WTC11 (cell line): ENCODE measurements at regions of chr10 and their contacts with region 1.

Region 1: GRCh38 chr10:70267161-70267933 is 16.5 kb downstream of the NPFFR1 start:
- DNase-seq: peak; percentile 79
- ATAC-seq: peak; percentile 56
- H3K4me3 Mint-ChIP-seq: no peak overlapping the region
- H3K27ac Mint-ChIP-seq: no peak overlapping the region
- H3K4me1 Mint-ChIP-seq: peaks cover 2% of the 10 kb centered on the region
- H3K27me3 Mint-ChIP-seq: peaks cover 9% of the 10 kb centered on the region
- CTCF ChIP-seq: peak; percentile 52

Region 2: DNA sequence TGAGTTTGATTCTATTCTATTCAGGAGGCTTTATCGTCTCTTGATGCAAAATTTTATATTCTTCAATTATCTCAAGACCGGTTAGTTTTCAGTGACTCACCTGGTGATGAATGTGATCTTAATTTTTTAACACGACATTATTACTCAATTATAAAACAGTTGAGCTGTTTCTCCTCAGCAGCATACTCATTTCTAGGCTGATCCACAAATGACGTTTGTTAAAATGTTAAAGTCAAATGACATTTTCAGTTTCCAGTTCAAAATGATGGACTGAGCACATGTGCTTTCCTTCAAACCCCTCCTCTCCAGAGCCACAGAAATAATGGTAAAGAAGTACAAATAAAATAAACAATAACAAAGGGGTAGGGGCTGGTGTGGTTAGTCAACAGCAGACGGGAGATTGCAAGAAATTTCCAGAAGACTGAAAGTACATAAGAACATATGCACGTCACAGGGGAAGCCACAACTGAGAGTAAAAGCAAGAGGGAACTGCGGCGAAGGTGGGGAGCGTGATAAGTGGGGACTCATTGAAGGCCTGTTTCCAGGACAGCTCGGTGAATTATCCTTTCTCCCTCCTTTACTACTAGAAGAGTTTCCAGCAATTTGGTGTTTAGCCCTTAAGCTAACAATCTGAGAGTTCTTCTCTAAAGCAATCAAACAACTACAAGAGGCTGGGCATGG is 203.8 kb before region 1 on chr10:
- CTCF ChIA-PET with region 1: no interaction called
- POLR2A ChIA-PET with region 1: no interaction called
- DNase-seq: no peak
- ATAC-seq: no peak
- H3K4me3 Mint-ChIP-seq: no peak overlapping the region
- H3K27ac Mint-ChIP-seq: no peak overlapping the region
- H3K4me1 Mint-ChIP-seq: peaks cover 11% of the 10 kb centered on the region
- H3K27me3 Mint-ChIP-seq: no peaks in the 10 kb centered on the region; the same call in 1 of the 2 replicates
- CTCF ChIP-seq: no peak

Region 3: DNA sequence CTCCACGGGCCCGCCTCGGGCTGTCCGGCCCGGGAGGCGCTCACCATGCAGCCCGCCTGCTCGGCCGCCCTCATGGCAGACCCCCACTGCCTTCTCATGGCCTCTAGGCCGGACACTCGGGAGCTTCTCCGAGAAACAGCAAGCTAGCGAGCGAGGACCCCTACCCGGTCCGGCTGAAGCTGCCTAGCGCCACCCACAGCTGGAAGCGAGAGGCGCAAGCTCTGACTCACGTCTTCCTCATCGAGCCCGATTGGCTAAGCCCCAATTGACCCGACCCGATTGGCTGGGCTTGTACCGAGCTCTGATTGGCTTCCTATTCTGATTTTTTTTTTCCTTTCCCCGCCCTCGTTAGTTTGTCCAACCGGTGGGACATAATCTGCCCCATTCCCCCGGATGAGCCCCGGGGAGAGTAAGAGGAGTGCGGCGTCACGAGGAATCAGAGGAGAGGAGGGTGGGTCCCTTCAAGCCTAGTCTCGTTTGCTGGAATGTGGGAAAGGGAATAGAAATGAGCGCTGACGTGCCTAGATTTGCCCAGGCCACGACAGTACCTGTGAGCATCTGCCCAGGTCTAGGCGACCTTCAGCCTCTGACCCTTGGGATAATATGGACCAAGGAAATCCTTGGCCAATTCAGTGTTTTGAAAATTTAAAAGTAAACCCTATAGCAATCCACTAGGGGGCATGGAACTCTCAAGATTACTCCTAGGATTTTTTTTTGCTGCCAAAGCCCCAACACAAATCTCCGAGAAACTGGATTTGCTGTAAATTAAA is 120.7 kb before region 1 on chr10 and contains the start of gene TYSND1:
- CTCF ChIA-PET with region 1: interaction called, 23 read pairs
- POLR2A ChIA-PET with region 1: interaction called, 4 read pairs
- DNase-seq: peak; percentile 98
- ATAC-seq: peak; percentile 93
- H3K4me3 Mint-ChIP-seq: peak within 1 kb of the TSS; percentile 78
- H3K27ac Mint-ChIP-seq: peak within 1 kb of the TSS; percentile 96
- H3K4me1 Mint-ChIP-seq: peaks cover 16% of the 10 kb centered on the region
- H3K27me3 Mint-ChIP-seq: no peaks in the 10 kb centered on the region
- CTCF ChIP-seq: peak; percentile 17; the same call in 1 of the 2 replicates
- total RNA-seq, gene TYSND1: 18.9 to 21.3 TPM (median 20.7 TPM) in 3 replicates

Region 4: GRCh38 chr10:70233109-70233938 is 34.0 kb before region 1 on chr10 and contains the start of gene PPA1:
- CTCF ChIA-PET with region 1: interaction called, 20 read pairs
- POLR2A ChIA-PET with region 1: no interaction called
- DNase-seq: peak; percentile 99
- ATAC-seq: peak; percentile 95
- H3K4me3 Mint-ChIP-seq: peak within 1 kb of the TSS; percentile 92
- H3K27ac Mint-ChIP-seq: peak within 1 kb of the TSS; percentile 73
- H3K4me1 Mint-ChIP-seq: peaks cover 8% of the 10 kb centered on the region
- H3K27me3 Mint-ChIP-seq: no peaks in the 10 kb centered on the region; the same call in 1 of the 2 replicates
- CTCF ChIP-seq: no peak
- total RNA-seq, gene PPA1: 140 to 180 TPM (median 144 TPM) in 3 replicates

Region 5: DNA sequence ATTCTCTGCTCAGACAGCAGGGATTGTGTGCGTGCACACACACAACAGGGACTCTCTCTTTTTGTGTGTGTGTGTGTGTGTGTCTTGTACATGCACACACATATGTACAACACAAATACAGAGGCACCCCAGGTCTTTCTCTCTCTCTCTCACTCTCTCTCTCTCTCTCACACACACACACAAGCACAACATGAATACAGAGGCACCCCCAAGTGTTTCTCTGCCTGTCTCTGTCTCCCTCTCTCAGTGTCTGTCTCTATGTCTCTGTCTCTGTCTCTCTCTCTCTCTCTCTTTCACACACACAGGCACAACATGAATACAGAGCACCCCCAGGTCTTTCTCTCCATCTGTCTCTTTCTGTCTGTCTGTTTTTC is 15.7 kb after region 1 on chr10:
- CTCF ChIA-PET with region 1: interaction called, 15 read pairs
- POLR2A ChIA-PET with region 1: no interaction called
- DNase-seq: no peak
- ATAC-seq: no peak
- H3K4me3 Mint-ChIP-seq: peak overlapping the region; percentile 50
- H3K27ac Mint-ChIP-seq: no peak overlapping the region
- H3K4me1 Mint-ChIP-seq: no peaks in the 10 kb centered on the region
- H3K27me3 Mint-ChIP-seq: peaks cover 63% of the 10 kb centered on the region
- CTCF ChIP-seq: no peak

Region 6: DNA sequence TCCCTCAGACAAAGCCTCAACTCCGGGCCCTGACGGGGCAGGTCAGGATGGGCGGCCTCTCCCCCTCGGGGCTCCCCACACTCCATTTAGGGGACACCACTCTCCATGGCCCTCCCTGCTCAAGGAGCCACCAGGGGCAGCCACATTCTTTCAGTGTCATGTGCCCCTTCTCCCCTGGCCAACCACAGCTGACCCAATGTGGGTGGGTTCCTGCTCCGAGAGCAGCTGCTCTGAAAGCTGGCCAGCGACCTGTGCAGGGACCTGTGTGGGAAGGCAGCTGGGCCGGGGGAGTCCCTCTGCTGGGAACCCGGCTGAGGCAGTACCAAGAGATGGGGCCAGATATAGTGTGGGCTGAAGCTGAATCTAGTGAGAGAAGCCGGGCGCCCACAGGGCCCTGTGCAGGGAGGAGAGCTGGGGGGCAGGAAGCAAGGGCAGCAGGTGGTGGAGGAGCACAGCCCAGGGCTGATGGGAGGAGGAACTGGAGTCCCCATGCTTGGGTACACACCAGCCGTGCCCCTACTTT is 57.1 kb after region 1 on chr10:
- CTCF ChIA-PET with region 1: interaction called, 24 read pairs
- POLR2A ChIA-PET with region 1: interaction called, 3 read pairs
- DNase-seq: peak; percentile 44
- ATAC-seq: peak; percentile 47
- H3K4me3 Mint-ChIP-seq: no peak overlapping the region
- H3K27ac Mint-ChIP-seq: no peak overlapping the region
- H3K4me1 Mint-ChIP-seq: peaks cover 17% of the 10 kb centered on the region
- H3K27me3 Mint-ChIP-seq: no peaks in the 10 kb centered on the region
- CTCF ChIP-seq: no peak

Region 7: DNA sequence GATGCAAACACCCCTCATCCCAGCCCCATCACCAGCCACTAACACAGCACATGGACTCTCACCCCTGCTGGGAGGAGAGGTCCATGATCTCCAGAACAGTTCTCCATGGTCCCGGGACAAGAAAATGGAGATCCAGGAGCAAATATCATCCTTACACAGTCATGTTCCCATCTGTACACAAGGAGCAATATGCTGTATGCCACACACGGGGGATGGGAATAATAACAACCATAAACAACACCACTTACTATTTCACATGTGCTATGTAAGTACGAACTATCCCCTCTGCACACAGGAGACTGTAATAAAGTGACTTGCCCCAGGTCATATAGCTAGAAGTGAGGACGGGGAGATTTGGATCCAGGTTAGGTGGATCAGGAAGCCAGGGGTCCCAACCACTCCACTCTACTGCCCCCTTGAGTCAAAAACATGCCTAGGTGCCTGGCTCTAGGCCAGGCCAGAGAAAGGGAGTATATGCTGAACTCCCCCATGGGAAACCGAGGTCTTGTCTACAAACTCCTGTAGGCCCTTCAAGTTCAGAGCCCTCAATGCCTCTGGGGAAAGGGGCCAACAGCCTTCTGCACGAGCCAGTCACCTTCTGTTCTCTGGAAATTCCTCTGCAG is 81.0 kb after region 1 on chr10:
- CTCF ChIA-PET with region 1: interaction called, 38 read pairs
- POLR2A ChIA-PET with region 1: no interaction called
- DNase-seq: peak; percentile 64
- ATAC-seq: peak; percentile 98
- H3K4me3 Mint-ChIP-seq: no peak overlapping the region
- H3K27ac Mint-ChIP-seq: no peak overlapping the region
- H3K4me1 Mint-ChIP-seq: no peaks in the 10 kb centered on the region
- H3K27me3 Mint-ChIP-seq: no peaks in the 10 kb centered on the region
- CTCF ChIP-seq: no peak; the same call in 1 of the 2 replicates

Region 8: GRCh38 chr10:70381471-70382421 is 114.4 kb after region 1 on chr10:
- CTCF ChIA-PET with region 1: interaction called, 20 read pairs
- POLR2A ChIA-PET with region 1: no interaction called
- DNase-seq: peak; percentile 62
- ATAC-seq: peak; percentile 16
- H3K4me3 Mint-ChIP-seq: peak overlapping the region; percentile 82
- H3K27ac Mint-ChIP-seq: no peak overlapping the region
- H3K4me1 Mint-ChIP-seq: peaks cover 46% of the 10 kb centered on the region
- H3K27me3 Mint-ChIP-seq: peaks cover 14% of the 10 kb centered on the region
- CTCF ChIP-seq: no peak

Region 9: GRCh38 chr10:70493660-70494234 is 226.4 kb after region 1 on chr10:
- CTCF ChIA-PET with region 1: no interaction called
- POLR2A ChIA-PET with region 1: no interaction called
- DNase-seq: peak; percentile 84
- ATAC-seq: peak; percentile 94
- H3K4me3 Mint-ChIP-seq: peak overlapping the region; percentile 5; the same call in 1 of the 2 replicates
- H3K27ac Mint-ChIP-seq: peak overlapping the region; percentile 97
- H3K4me1 Mint-ChIP-seq: peaks cover 67% of the 10 kb centered on the region
- H3K27me3 Mint-ChIP-seq: no peaks in the 10 kb centered on the region
- CTCF ChIP-seq: no peak